ENCODE measurements at regions of chr12 and their contacts with region 1.

Region 1: DNA sequence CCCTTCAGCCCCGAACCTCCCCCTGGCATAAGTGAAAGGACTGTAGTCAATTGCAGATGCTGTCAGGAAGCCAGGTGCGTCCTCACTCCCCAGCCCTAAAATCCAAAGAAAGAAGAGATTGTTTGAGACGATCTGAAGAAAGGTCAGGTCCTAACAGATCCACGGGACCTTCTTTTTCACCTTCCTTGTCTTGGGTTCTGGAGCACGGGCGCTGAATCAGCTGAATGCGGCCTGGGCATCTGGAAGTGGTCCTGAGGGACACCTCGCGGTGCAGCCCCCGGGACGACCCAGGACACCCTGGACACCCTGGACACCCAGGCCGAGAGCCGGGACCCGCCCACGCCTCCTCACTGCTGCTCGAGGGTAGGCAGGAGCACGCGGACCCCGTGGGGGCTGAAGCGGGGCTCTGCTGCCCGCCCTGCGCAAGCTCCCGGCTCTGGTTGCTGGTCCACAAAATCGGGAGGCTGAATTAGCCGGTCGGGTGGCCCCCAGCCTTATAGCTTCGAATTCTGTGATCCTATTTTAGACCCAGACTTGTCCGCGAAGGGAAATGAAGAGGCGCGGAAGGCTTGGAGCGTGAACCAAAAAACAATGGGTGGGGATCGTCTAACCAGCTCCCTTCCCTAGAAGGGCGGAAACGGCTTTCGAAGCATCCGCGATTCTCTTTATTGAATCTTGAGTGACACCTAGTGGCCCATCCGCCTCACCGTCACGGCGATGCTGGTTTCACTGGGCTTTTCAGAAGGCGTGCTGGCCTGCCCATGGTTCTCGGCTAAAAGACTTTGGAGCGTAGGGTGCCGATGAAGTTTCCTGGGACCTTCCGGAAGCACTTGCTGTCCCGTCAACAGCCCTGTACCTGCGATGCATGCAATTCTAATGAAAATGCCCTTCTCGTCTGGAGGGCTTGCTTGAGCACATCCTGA is 46.4 kb upstream of the PLXNC1 start:
- DNase-seq: peak; percentile 93
- ATAC-seq: peak; percentile 85
- H3K4me3 Mint-ChIP-seq: peak overlapping the region; percentile 79
- H3K27ac Mint-ChIP-seq: peak overlapping the region; percentile 84
- H3K4me1 Mint-ChIP-seq: peaks cover 39% of the 10 kb centered on the region
- H3K27me3 Mint-ChIP-seq: peaks cover 9% of the 10 kb centered on the region

Region 2: DNA sequence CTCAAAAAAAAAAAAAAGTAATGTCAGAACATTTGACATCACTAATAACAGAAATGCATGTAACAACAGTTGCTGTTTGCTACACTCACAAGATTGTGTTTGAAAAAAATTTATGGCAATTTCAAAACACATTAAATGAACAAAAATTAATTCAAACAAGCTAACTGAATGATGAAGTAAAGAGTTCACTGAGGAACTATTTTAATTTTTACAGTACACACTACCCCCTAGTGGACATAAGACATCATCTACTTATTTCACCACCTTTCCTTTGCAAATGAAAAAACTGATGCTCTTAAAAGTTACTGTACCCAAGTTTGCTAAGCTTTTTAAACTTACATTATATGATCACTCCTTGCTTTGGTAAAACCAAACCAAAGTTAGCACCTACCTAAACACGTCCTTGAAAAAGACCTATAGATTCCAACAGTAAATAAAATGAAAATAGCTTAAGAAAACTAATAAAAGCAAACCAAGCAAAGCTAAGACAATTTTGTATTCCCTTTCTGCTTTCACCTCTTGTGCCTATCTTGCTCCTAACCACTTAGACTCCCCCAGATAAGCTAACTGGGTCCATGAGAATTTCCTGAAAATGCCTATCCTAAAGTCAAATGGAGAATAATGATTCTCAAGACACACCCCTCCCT is 682.5 kb before region 1 on chr12:
- CTCF ChIA-PET with region 1: interaction called, 28 read pairs
- POLR2A ChIA-PET with region 1: no interaction called
- DNase-seq: no peak
- ATAC-seq: peak; percentile 62
- H3K4me3 Mint-ChIP-seq: no peak overlapping the region
- H3K27ac Mint-ChIP-seq: no peak overlapping the region
- H3K4me1 Mint-ChIP-seq: peaks cover 75% of the 10 kb centered on the region
- H3K27me3 Mint-ChIP-seq: no peaks in the 10 kb centered on the region

Region 3: GRCh38 chr12:93514853-93515252 is 587.1 kb before region 1 on chr12:
- CTCF ChIA-PET with region 1: interaction called, 19 read pairs
- POLR2A ChIA-PET with region 1: no interaction called
- DNase-seq: no peak
- ATAC-seq: no peak
- H3K4me3 Mint-ChIP-seq: no peak overlapping the region
- H3K27ac Mint-ChIP-seq: no peak overlapping the region
- H3K4me1 Mint-ChIP-seq: no peaks in the 10 kb centered on the region
- H3K27me3 Mint-ChIP-seq: peaks cover 2% of the 10 kb centered on the region

Region 4: GRCh38 chr12:93677195-93678064 is 424.6 kb before region 1 on chr12 and contains the start of gene CRADD:
- CTCF ChIA-PET with region 1: interaction called, 15 read pairs
- POLR2A ChIA-PET with region 1: no interaction called
- DNase-seq: peak; percentile 93
- ATAC-seq: peak; percentile 96
- H3K4me3 Mint-ChIP-seq: peak within 1 kb of the TSS; percentile 92
- H3K27ac Mint-ChIP-seq: peak within 1 kb of the TSS; percentile 99
- H3K4me1 Mint-ChIP-seq: peaks cover 32% of the 10 kb centered on the region
- H3K27me3 Mint-ChIP-seq: peaks cover 8% of the 10 kb centered on the region
- total RNA-seq, gene CRADD: 10.8 to 14.6 TPM

Region 5: DNA sequence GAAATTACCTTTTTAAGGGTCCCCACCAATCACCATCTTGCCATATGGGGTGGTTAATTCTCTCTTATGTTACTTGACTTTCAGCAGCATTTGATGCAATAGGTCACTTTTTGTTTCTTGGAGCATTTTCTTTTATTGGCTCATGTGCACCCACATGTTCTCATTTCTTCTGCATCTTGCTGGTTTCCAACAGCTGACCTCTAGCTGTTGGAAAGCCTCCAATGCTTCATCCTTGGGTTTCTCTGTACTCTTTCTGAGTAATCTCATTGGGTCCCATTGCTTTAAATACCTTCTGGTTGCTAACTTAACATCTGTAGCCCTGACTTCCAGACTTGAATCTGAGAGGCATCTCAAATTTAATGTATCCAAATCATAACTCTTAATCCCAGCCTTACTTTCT is 308.0 kb before region 1 on chr12:
- CTCF ChIA-PET with region 1: interaction called, 10 read pairs
- POLR2A ChIA-PET with region 1: no interaction called
- DNase-seq: no peak
- ATAC-seq: no peak
- H3K4me3 Mint-ChIP-seq: no peak overlapping the region
- H3K27ac Mint-ChIP-seq: no peak overlapping the region
- H3K4me1 Mint-ChIP-seq: peaks cover 18% of the 10 kb centered on the region
- H3K27me3 Mint-ChIP-seq: no peaks in the 10 kb centered on the region

Region 6: DNA sequence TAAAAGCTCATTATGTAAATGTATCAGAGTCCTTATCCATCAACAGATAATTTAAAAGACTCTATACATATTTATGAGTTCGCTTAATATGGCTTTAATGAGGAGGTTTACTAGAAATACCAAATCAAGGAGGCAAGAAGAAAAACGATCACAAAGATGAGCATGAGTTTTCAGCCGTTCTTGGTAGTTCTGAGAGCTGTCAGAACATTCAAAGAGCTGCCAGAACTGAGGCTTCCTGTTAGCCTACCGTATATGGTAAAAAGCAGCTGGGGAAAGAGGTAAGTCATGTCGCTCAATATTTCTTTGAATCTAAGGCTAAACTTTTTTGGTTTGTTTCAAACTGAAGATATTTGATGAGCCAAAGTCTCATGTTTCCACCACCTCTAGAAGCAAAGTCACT is 68.9 kb before region 1 on chr12:
- CTCF ChIA-PET with region 1: interaction called, 20 read pairs
- POLR2A ChIA-PET with region 1: no interaction called
- DNase-seq: peak; percentile 28
- ATAC-seq: peak; percentile 75
- H3K4me3 Mint-ChIP-seq: no peak overlapping the region
- H3K27ac Mint-ChIP-seq: peak overlapping the region; percentile 68
- H3K4me1 Mint-ChIP-seq: peaks cover 33% of the 10 kb centered on the region
- H3K27me3 Mint-ChIP-seq: no peaks in the 10 kb centered on the region

Region 7: DNA sequence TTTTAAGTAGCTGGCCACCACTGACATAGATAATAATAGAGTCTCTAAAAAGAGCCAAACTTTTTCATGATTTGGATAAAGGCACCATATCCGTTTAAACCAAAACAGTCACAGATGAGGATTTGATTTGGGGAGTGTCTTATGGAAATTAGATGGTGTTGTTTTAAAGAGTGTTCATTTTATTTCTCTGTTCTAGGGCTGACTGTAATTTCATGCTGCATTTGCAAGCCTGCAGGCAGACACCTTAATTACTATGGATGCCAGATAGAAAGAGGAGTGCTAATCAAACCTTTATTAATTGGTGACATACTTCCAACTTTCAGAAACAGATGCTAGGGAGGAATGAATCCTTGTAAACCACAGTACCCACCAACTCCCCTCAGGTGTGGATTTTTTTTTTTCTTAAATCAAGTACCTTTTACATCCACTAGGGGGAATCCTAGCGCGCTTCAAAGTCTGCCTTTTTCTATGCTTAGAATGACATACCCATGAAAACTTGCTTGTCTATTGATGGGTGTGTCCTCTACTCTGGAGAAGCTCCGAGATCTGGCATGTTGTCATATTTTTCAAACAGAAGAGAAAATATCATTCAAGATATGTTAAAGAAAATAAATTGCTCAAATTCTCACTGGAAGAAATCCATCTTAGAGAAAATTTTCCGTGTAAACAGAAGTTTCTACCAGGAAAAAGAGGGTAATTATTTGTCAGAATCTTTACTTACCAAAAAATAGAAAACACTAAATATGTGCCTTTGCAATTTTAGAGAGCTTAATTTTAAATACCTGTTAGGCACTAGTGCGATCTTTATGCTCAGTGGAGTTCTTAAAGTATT is 32.2 kb after region 1 on chr12:
- CTCF ChIA-PET with region 1: interaction called, 19 read pairs
- POLR2A ChIA-PET with region 1: no interaction called
- DNase-seq: peak; percentile 64
- ATAC-seq: peak; percentile 93
- H3K4me3 Mint-ChIP-seq: no peak overlapping the region
- H3K27ac Mint-ChIP-seq: no peak overlapping the region
- H3K4me1 Mint-ChIP-seq: peaks cover 14% of the 10 kb centered on the region
- H3K27me3 Mint-ChIP-seq: peaks cover 6% of the 10 kb centered on the region

Region 8: DNA sequence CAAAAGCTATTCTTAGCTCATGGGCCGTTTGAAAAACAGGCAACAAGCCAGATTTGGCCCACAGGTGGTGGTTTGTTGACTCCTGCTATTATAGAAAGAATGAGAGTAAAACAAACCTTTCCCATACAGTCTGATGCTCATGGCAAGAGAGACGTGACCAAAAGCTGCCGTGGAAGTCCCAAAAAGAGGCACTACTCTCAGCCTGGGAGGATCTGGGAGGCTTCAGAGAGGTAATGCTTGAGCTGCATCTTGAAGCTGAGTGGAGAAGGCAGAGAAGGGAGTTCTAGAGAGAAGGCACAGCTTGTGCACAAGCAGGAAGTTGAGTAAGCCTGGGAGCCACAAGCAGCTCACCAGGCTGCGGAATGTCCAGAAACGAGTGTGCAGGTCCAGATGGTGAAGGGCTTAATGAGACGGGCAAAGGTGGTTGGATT is 56.0 kb after region 1 on chr12:
- CTCF ChIA-PET with region 1: no interaction called
- POLR2A ChIA-PET with region 1: no interaction called
- DNase-seq: no peak
- ATAC-seq: no peak
- H3K4me3 Mint-ChIP-seq: no peak overlapping the region
- H3K27ac Mint-ChIP-seq: no peak overlapping the region
- H3K4me1 Mint-ChIP-seq: peaks cover 25% of the 10 kb centered on the region
- H3K27me3 Mint-ChIP-seq: peaks cover 1% of the 10 kb centered on the region

Region 9: DNA sequence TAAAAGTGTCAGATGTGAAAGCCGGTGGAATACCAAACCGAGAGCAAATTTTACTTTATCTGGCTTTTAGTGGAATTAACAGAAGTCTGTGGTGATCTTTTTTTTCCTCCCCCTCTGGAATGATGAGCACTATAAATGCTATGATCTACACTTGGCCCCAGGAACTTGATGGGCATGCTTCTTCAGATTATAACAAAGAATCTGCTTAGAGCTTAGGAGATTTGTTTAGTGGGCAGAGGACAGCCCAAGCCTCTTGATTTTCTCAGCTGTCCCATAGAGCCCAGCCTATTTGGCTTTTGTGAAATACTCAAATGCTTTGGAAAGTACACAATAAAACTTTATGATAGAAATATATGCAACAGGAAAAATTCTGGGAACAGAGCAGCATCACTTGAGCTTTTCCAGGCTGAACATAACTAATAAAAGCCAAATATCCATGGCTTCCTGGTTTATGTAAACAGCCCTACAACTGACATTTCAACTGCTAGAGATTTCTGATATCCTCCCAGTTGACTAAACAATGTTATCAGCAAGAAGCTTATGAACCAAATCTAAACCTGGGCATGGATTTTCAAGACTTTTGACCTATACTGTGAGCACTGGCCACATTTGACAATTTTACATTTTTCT is 196.0 kb after region 1 on chr12:
- CTCF ChIA-PET with region 1: no interaction called
- POLR2A ChIA-PET with region 1: no interaction called
- DNase-seq: no peak
- ATAC-seq: no peak
- H3K4me3 Mint-ChIP-seq: no peak overlapping the region
- H3K27ac Mint-ChIP-seq: no peak overlapping the region
- H3K4me1 Mint-ChIP-seq: peaks cover 5% of the 10 kb centered on the region
- H3K27me3 Mint-ChIP-seq: no peaks in the 10 kb centered on the region

Measured in activated CD8-positive, alpha-beta T cell treated with anti-CD3 and anti-CD28 coated beads, Interleukin-2, amount 10 ng/mL, durations not matched to agents 7 days and 5 days (primary cell).